Common myeloid progenitor, CD34-positive (primary cell): ENCODE measurements at regions of chr6 and their contacts with region 1.

Region 1: DNA sequence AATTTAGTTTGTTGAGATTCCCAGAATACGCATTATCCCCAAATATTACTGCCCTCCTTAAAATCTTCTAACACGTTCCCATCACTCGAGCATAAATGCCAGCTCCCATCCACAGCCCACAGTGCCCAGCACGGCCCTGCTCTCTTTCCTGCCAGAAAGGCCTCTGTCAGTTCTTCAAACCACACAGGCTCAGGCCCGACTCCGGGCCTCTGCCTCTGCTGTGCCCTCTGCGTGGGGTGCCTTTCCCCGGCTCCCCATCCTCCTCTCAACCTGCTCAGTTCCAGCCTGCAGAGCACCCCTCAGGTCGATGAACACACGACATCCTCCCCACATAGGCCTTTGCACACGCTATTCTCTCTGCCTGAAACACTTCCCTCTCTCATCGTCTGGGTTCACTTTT is 12.8 kb downstream of the ULBP3 start:
- DNase-seq: no peak
- H3K4me3 ChIP-seq: no peak overlapping the region
- H3K27ac ChIP-seq: no peak overlapping the region
- H3K4me1 ChIP-seq: peaks cover 0 to 3% (median 1%) of the 10 kb centered on the region in 4 experiments
- H3K27me3 ChIP-seq: peaks cover 0 to 55% (median 14%) of the 10 kb centered on the region in 5 experiments

Region 2: GRCh38 chr6:150068720-150069648 is 12.8 kb after region 1 on chr6 and contains the start of gene ULBP3:
- CTCF ChIA-PET with region 1: interaction called, 16 read pairs
- POLR2A ChIA-PET with region 1: no interaction called
- DNase-seq: peak; percentile 72 to 78 (median 72)
- H3K4me3 ChIP-seq: peak within 1 kb of the TSS; percentile 41 to 89 (median 76)
- H3K27ac ChIP-seq: no peak within 1 kb of the TSS
- H3K4me1 ChIP-seq: peaks cover 0 to 15% (median 11%) of the 10 kb centered on the region in 4 experiments
- H3K27me3 ChIP-seq: peaks cover 0 to 3% (median 0%) of the 10 kb centered on the region in 5 experiments